ENCODE measurements at regions of chr4 and their contacts with region 1.

Region 1: DNA sequence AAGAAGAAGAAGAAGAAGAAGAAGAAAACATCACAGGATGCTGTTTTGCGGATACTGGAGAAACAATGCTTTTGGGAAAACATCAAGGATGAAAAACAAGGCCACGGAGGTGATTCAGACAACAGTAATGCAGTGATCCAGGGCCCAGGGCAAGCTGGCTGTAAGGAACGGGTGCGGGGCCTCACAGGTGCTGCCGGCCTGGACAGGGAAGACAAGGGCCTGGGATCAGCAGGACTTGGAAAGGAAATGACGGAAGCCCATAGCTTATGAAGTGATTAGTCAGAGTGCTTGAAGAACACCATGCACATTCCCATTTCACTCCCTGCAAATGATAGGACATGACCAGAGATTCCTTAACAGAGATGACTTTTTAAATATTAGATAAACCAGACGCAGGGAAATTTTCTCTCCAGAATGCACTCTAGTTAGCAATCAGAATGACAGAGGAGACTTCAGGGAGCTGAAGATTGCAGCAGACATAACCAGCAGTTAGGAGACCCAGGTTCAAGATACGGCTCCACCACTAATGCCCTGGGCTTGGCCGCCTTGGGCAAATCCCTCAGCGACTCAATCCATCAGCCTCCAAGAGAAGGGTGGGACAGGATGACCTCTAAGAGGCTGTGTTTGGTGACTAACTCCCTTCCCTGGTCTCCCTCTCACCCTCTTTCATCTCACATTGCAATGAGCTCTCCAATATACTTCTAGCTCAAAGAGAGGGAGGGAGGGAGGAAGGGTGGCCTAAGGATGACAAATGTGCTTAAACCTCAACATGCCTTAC is 54.1 kb downstream of the APBB2 start:
- DNase-seq: no peak
- H3K4me3 ChIP-seq: no peak overlapping the region
- H3K27ac ChIP-seq: peak overlapping the region in 2 of 4 donors; percentile 24 to 53
- H3K4me1 ChIP-seq: peaks cover 0 to 21% (median 18%) of the 10 kb centered on the region in 4 donors
- H3K27me3 ChIP-seq: no peaks in the 10 kb centered on the region
- CTCF ChIP-seq: no peak
- EP300 ChIP-seq: no peak
- POLR2A ChIP-seq: no peak

Region 2: DNA sequence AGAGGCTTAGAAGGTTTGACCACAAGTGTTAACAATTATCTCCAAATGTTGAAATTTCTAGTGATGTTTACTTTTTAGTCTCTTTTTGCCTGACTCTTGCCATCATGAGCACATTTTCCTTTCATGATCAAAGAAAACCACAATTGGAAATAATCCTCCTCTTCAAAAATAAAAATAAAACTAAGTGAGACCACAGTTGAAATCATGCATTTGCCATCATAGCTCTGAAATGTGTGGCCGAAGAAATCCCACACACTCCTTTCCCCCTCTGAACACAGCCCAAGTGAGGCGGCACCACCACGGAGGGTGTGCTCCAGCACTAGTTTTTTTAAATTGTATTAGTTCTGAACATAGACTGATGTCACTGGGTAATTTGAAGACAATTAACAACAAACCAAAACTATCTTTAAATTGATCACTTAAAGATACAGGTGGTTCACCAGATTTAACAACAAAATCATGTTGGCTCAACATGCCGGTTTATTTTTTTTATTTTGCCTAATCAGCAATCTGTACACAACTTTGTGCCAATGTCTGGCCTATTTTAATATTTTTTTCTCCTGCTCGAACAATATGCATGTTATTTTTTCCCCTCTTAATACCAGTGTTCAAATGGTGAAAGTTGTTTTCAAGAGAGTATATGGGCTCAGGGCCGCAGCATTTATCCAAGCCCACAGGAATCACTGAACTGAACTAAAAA is 36.6 kb after region 1 on chr4:
- intact Hi-C with region 1: loop called (anchors 5 kb)
- DNase-seq: no peak
- H3K4me3 ChIP-seq: no peak overlapping the region
- H3K27ac ChIP-seq: no peak overlapping the region
- H3K4me1 ChIP-seq: peaks cover 0 to 3% (median 0%) of the 10 kb centered on the region in 4 donors
- H3K27me3 ChIP-seq: no peaks in the 10 kb centered on the region
- CTCF ChIP-seq: no peak
- EP300 ChIP-seq: no peak
- POLR2A ChIP-seq: no peak

Region 3: DNA sequence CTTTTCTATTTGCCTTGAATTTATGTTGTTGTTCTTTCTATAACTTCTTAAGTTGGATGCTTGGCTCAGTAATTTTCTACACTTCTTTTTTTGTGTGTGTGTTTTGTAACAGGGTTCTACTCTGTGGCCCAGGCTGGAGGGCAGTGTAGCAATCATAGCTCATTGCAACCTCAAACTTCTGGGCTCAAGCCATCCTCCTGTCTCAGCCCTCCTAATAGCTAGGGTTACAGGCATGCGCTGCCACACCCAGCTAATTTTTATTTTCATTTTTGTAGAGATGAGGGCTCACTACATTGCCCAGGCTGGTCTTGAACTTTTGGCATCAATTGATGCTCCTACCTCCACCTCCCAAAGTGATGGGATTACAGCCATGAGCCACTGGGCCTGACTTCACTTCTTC is 75.8 kb after region 1 on chr4:
- intact Hi-C with region 1: no loop called
- DNase-seq: no peak
- H3K4me3 ChIP-seq: no peak overlapping the region
- H3K27ac ChIP-seq: no peak overlapping the region
- H3K4me1 ChIP-seq: no peaks in the 10 kb centered on the region
- H3K27me3 ChIP-seq: no peaks in the 10 kb centered on the region
- CTCF ChIP-seq: no peak
- EP300 ChIP-seq: no peak
- POLR2A ChIP-seq: no peak

Region 4: GRCh38 chr4:41268022-41268421 is 107.8 kb after region 1 on chr4:
- intact Hi-C with region 1: no loop called
- DNase-seq: no peak
- H3K4me3 ChIP-seq: no peak overlapping the region
- H3K27ac ChIP-seq: no peak overlapping the region
- H3K4me1 ChIP-seq: no peaks in the 10 kb centered on the region
- H3K27me3 ChIP-seq: no peaks in the 10 kb centered on the region
- CTCF ChIP-seq: no peak
- EP300 ChIP-seq: no peak
- POLR2A ChIP-seq: no peak